A549 (cell line): ENCODE measurements at regions of chr19 and their contacts with region 1.

Region 1: DNA sequence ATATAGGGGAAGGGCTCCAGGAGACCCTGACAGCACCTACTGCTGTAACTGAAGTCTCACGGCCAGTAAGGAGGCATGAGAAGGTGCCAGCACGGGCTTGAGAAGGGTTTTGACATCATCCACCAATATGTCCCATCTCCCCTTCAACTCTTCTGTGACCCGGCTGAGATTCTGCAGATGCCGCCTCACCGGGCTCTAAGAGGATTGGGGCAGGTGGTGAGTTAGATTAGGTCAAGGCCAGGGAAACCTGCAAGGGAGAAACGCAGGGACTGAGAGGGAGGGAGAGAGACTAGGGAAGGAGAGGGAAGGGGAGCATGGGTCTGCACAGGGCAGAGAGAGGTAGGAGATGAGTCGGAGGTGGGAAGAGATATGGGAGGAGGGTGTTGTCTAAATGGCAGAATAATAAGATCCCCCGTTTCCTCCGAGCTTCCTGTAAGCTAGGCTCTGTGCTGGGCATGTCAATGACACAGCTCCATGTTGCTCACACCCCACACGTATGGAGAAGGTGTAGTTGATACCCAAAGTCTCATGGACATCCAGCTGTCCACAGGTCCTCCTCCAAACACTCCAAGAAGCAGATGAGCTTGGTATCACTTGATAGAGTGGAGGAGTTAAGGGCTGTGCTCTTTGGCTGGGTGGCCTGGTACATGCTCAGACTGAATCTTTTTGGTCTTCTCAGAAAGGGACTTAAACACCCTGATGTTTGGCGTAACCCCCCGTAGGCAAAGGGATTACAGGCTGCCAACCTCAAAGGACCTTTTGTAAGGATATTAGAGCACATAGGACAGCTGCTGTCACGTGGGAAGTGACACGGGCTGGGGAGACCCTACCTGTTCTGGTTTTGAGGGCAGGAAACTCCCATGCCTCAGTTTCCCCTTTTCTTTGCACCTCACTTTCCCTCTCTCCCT is 6.1 kb downstream of the TPRX1 start:
- DNase-seq: no peak
- ATAC-seq: peak; percentile 62 to 69
- H3K4me3 ChIP-seq: no peak overlapping the region
- H3K27ac ChIP-seq: no peak overlapping the region
- H3K4me1 ChIP-seq: no peaks in the 10 kb centered on the region
- CTCF ChIP-seq: no peak
- EP300 ChIP-seq: no peak
- POLR2A ChIP-seq: no peak
- RAD21 ChIP-seq: no peak

Region 2: DNA sequence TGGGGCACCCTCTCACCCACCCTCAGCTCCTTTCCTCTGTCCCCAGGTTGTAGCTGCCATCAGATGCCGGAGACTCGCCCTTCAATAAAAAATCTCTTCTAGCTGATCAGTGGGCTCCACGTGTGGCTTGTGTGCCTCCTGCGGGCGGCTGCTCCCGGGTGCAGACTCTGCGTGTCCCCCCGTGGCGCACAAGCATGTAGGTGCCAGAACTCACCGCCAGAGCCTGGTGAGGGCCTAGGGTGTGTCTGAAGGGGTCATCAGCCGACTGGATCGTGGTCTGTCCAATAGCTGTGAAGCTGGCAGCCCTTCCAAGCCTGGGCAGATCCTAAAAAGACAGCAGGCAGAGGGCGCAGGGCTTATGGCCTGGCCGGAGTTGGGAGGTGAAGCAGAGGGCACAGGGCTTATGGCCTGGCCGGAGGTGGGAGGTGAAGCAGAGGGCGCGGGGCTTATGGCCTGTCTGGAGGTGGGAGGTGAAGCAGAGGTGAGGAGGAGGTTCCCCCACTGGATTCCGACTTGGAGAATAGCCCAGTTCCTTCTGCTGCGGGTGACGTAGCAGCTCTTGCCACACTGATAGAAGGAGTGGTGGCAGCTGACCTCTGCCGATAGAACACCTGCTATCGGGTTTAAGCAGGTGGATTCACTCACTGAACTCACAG is 41.2 kb before region 1 on chr19:
- CTCF ChIA-PET with region 1: no interaction called
- POLR2A ChIA-PET with region 1: no interaction called
- DNase-seq: no peak
- ATAC-seq: peak; percentile 5 to 11; a peak in 3 of 6 replicates
- H3K4me3 ChIP-seq: no peak overlapping the region
- H3K27ac ChIP-seq: no peak overlapping the region
- H3K4me1 ChIP-seq: no peaks in the 10 kb centered on the region; the same call in 2 of the 3 replicates
- CTCF ChIP-seq: no peak
- EP300 ChIP-seq: no peak
- POLR2A ChIP-seq: no peak
- RAD21 ChIP-seq: no peak

Region 3: GRCh38 chr19:47813304-47814004 is 15.2 kb after region 1 on chr19:
- CTCF ChIA-PET with region 1: interaction called, 10 read pairs
- POLR2A ChIA-PET with region 1: no interaction called
- DNase-seq: peak; percentile 70 to 85
- ATAC-seq: peak; percentile 95 to 97
- H3K4me3 ChIP-seq: no peak overlapping the region
- H3K27ac ChIP-seq: no peak overlapping the region
- H3K4me1 ChIP-seq: no peaks in the 10 kb centered on the region; the same call in 2 of the 3 replicates
- CTCF ChIP-seq: peak; percentile 80
- EP300 ChIP-seq: no peak
- POLR2A ChIP-seq: no peak
- RAD21 ChIP-seq: peak; percentile 54 to 63